BJ (cell line): ENCODE measurements at regions of chr9 and their contacts with region 1.

Region 1: DNA sequence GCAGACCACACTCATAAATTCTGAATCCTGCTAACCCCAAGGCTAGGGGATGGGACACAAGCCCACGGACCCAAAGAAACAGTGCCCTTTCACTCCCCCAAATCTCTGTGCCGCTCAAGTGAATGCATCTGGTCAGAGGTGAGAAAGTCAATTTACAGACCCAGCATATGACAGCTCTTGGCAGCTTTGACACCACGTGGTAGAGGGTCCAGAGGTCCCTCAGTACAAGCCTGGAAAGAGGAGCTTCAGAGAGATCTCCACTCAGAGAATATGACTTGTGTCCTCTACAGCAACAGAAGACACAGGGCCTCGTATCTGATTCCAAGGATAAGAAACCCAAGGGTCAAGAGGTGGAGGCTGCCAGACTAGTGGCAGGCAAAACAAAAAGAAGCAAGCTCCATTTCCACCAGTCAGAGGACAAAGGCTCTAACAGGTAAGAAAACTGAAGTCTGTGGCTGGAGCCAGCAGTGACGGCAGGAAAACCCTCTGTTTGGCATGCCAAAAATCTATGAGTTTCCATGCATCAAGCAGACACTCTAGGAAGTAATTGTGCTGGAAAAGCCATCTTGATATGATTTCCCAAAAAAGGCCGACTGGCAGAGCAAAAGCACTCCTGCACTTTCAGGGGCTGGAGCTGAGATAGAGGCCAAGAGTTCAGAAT is 138.7 kb downstream of the UGCG start:
- DNase-seq: no peak
- H3K4me3 ChIP-seq: no peak overlapping the region
- H3K27me3 ChIP-seq: no peaks in the 10 kb centered on the region
- CTCF ChIP-seq: no peak

Region 2: DNA sequence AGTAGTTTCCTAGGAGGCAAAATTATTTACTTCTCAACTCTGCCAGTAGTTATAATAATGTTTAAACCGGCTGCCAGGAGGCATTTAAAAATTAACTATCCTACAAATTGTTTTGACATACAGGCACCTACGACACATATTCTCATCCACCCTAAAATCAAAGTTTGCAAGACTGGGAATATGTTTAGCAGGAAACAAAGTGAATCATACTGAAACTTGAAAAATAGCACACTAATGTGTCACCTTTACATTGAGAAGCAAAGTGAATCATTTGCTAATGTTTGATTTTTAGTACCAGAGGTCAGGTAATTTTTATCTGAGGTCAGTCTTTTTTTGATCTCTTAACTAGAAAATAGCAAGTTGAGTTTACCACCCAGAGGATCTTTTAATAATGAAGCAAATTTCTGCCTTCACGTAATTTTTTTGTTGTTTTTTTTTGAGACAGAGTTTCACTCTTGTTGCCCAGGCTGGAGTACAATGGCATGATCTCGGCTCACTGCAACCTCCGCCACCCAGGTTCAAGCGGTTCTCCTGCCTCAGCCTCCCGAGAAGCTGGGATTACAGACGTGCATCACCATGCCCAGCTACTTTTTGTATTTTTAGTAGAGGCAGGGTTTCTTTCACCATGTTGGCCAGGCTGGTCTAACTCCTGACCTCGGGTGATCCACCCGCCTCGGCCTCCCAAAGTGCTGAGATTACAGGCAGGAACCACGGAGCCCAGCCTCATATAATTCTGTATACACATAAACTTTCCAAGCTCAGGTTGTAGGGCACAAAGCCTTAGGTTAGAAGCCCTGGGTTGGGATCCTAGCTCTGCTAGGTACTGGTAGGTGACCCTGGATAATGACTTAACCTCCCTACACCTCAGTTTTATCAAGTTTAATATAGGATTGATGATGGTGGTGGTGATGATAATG is 14.4 kb before region 1 on chr9:
- CTCF ChIA-PET with region 1: interaction called, 10 read pairs
- POLR2A ChIA-PET with region 1: no interaction called
- DNase-seq: peak; percentile 74
- H3K4me3 ChIP-seq: no peak overlapping the region
- H3K27me3 ChIP-seq: no peaks in the 10 kb centered on the region
- CTCF ChIP-seq: no peak